HepG2 (cell line): ENCODE measurements at regions of chr3 and their contacts with region 1.

Region 1: DNA sequence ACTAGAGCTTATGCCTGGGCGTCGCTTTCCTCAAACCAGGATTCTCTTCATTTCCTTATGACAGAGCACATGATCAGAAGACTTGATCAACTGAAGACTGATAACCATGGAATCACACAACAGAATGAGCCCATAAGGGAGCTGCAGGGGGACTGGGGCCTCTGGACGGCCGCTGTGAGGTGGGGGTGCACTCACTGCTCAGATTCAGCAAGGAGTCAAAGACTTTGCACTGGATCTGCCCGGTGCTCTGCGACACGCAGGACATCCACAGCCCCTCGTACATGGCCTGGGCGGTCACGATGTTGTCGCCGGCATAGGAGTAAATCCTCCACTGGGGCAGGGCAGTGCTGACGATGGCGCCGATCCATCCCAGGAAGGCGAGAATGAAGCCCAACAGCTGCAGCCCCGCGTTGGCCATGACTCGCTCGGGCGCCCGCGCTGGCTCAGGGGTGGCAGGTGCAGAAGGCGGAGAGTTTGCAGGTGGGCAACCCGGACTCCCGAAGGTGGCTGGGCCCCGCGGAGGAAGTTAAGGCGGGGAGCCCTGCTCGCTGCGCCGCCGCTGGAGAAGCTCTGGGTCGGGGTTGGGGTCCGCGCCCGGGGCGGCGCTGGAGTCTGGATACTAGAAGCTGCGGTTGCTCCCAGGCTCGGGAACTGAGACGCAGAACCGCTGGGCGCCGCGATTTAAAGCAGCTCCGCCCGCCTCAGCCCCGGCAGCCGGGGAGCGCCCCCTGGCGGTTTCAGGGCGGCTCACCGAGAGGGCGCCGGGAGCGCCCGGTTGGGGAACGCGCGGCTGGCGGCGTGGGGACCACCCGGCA is at the start of gene CLDN1:
- DNase-seq: peak; percentile 70
- ATAC-seq: peak; percentile 94
- H3K4me3 ChIP-seq: peak within 1 kb of the TSS; percentile 92 to 96 (median 95)
- H3K27ac ChIP-seq: peak within 1 kb of the TSS; percentile 72
- H3K4me1 ChIP-seq: peaks cover 48% of the 10 kb centered on the region
- H3K27me3 ChIP-seq: no peaks in the 10 kb centered on the region; a peak in 1 of 5 replicates
- CTCF ChIP-seq: peak; percentile 89
- EP300 ChIP-seq: no peak
- POLR2A ChIP-seq: peak; percentile 76 to 84
- RAD21 ChIP-seq: peak; percentile 98
- total RNA-seq, gene CLDN1: 28.4 and 42.7 TPM in 2 replicates

Region 2: GRCh38 chr3:188881954-188882641 is 1439.9 kb before region 1 on chr3:
- CTCF ChIA-PET with region 1: no interaction called
- POLR2A ChIA-PET with region 1: no interaction called
- in situ Hi-C with region 1: no loop called
- intact Hi-C with region 1: loop called (anchors 10 kb)
- DNase-seq: peak; percentile 24
- ATAC-seq: no peak
- H3K4me3 ChIP-seq: no peak overlapping the region
- H3K27ac ChIP-seq: peak overlapping the region; percentile 62
- H3K4me1 ChIP-seq: peaks cover 26% of the 10 kb centered on the region
- H3K27me3 ChIP-seq: no peaks in the 10 kb centered on the region
- CTCF ChIP-seq: no peak
- EP300 ChIP-seq: no peak
- POLR2A ChIP-seq: no peak
- RAD21 ChIP-seq: no peak

Region 3: DNA sequence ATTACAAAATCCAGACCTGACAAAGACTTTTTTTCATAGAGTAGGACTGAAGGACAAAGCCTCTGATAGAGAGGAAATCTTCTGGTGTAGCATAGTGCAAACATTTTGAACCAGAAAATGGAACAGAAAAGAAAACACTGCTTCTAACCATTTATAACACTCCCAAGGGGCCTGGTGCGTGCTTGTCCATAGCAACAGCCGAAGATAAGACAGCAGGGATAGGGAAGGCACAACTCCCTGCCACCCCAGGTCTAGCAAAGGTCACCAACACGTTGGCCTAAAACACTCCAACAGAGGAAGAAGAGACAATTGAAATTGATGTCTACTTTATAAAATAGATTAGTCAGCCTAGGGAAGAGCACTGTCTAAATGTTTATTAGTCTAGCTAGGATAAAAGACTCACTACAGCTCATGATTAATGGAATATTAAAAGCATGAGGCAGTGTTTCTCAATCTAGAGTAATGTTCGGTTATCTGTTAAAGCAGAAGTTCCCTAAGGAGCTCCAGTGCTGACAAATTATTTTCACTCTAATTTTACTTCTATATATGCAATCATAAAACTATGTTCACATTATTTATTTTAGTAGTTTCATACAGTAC is 346.5 kb before region 1 on chr3:
- CTCF ChIA-PET with region 1: no interaction called
- POLR2A ChIA-PET with region 1: no interaction called
- in situ Hi-C with region 1: loop called (anchors 10 kb)
- intact Hi-C with region 1: no loop called
- DNase-seq: no peak
- ATAC-seq: no peak
- H3K4me3 ChIP-seq: no peak overlapping the region
- H3K27ac ChIP-seq: no peak overlapping the region
- H3K4me1 ChIP-seq: no peaks in the 10 kb centered on the region
- H3K27me3 ChIP-seq: no peaks in the 10 kb centered on the region
- CTCF ChIP-seq: no peak
- EP300 ChIP-seq: no peak
- POLR2A ChIP-seq: no peak
- RAD21 ChIP-seq: no peak

Region 4: DNA sequence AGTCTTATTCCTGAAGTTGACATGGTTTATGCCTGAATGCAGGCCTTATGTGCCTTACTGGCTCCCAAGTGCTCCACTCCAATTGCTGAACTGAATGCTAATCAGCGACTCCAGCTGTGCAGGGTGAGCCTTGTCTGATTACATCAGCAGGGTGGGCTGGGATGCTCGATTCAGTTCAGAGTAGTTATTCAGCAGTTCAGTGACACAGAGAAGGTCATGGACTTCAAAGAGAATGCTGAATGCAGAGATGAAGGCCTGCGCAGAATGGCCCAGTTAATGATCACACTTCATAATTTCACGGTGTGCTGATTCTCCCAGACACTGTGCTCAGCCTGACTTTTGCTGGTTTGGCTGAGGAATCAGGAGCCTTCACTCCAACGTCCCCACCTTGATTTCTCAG is 63.4 kb before region 1 on chr3:
- CTCF ChIA-PET with region 1: no interaction called
- POLR2A ChIA-PET with region 1: no interaction called
- in situ Hi-C with region 1: no loop called
- intact Hi-C with region 1: loop called (anchors 2 kb)
- DNase-seq: peak; percentile 63
- ATAC-seq: peak; percentile 99
- H3K4me3 ChIP-seq: no peak overlapping the region; a peak in 1 of 6 replicates
- H3K27ac ChIP-seq: no peak overlapping the region
- H3K4me1 ChIP-seq: peaks cover 19% of the 10 kb centered on the region
- H3K27me3 ChIP-seq: no peaks in the 10 kb centered on the region
- CTCF ChIP-seq: 0 out of 2 replicates have a peak, but pooled peaks have one; percentile 7
- EP300 ChIP-seq: no peak
- POLR2A ChIP-seq: no peak
- RAD21 ChIP-seq: no peak

Region 5: DNA sequence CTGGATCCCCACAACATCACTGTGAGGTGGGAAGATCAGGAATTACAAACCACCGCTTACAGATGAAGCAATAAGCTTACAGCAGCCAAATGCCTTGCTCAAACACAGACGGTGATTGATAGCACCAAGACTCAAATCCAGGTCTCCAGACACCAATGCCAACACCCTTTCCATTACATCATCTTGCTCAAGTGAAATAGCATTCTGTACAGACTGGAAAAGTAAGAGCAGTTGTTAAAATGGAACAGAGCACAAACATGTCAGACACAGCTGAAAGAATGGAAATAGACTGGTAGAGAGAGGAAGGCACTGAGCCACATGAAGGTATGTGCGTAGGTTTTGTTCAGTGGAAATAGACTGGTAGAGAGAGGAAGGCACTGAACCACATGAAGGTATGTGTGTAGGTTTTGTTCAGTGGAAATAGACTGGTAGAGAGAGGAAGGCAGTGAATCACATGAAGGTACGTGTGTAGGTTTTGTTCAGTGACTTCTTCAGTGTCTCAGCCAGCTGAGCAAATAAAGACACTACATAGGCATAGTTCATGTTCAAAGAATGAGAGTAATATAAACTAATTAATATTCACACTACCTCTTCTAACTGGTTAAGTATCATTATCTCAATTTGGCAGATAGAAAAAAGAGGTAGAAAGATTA is 15.4 kb before region 1 on chr3:
- CTCF ChIA-PET with region 1: no interaction called
- POLR2A ChIA-PET with region 1: interaction called, 54 read pairs
- in situ Hi-C with region 1: no loop called
- intact Hi-C with region 1: no loop called
- DNase-seq: peak; percentile 55
- ATAC-seq: peak; percentile 69
- H3K4me3 ChIP-seq: peak overlapping the region in 1 of 3 experiments; percentile 45; a peak in 1 of 6 replicates
- H3K27ac ChIP-seq: peak overlapping the region; percentile 80
- H3K4me1 ChIP-seq: peaks cover 68% of the 10 kb centered on the region
- H3K27me3 ChIP-seq: no peaks in the 10 kb centered on the region
- CTCF ChIP-seq: no peak
- EP300 ChIP-seq: peak in 1 of 2 experiments; percentile 54; a peak in 1 of 4 replicates
- POLR2A ChIP-seq: no peak
- RAD21 ChIP-seq: no peak

Region 6: GRCh38 chr3:190345027-190345821 is 23.2 kb after region 1 on chr3:
- CTCF ChIA-PET with region 1: no interaction called
- POLR2A ChIA-PET with region 1: interaction called, 49 read pairs
- in situ Hi-C with region 1: no loop called
- intact Hi-C with region 1: no loop called
- DNase-seq: peak; percentile 98
- ATAC-seq: peak; percentile 96
- H3K4me3 ChIP-seq: peak overlapping the region; percentile 35 to 45 (median 38); a peak in 5 of 6 replicates
- H3K27ac ChIP-seq: peak overlapping the region; percentile 89
- H3K4me1 ChIP-seq: peaks cover 35% of the 10 kb centered on the region
- H3K27me3 ChIP-seq: no peaks in the 10 kb centered on the region
- CTCF ChIP-seq: no peak
- EP300 ChIP-seq: peak in 1 of 2 experiments; percentile 87; a peak in 1 of 4 replicates
- POLR2A ChIP-seq: peak in 1 of 2 experiments; percentile 42; a peak in 1 of 4 replicates
- RAD21 ChIP-seq: no peak

Region 7: DNA sequence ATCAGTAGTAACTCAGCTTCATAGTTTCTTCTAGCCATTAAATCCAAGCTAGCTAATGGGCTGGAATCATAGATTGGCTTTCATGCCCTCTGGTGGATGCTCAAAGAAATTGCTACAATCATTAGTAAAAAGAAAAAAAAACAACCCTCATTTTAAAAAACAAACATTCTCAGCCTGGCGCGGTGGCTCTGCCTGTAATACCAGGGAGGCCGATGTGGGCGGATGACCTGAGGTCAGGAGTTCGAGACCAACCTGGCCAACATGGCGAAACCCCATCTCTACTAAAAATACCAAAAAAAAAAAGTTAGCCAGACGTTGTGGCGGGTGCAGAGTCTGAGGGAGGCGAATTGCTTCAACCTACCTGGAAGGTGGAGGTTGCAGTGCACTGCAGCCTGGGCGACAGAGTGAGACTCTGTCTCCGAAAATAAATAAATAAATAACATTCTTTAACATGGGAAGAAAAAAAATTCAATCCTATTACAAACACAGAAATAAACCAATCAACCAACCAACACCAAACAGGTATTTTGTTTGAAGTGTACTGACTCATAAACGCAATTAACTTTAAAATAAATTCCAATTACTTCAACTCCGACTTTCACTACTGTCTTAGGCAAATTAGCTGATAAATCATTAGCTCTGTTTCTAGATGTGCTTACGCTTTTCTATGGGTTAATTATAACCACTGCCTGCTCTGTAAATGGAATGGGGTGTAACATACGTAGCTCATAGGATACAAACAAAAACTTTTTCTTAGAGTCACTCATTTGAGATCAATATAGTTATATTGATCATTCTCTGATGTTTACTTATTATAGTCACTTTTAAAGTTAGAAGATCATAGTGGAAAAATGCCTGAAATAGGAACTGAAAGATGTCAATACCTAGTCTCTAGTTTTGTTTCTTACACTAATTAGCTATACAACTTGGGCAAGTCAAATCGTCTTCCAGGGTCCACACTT is 102.8 kb after region 1 on chr3:
- CTCF ChIA-PET with region 1: interaction called, 5 read pairs
- POLR2A ChIA-PET with region 1: interaction called, 4 read pairs
- in situ Hi-C with region 1: no loop called
- intact Hi-C with region 1: loop called (anchors 1 kb)
- DNase-seq: peak; percentile 77
- ATAC-seq: peak; percentile 96
- H3K4me3 ChIP-seq: no peak overlapping the region
- H3K27ac ChIP-seq: no peak overlapping the region
- H3K4me1 ChIP-seq: no peaks in the 10 kb centered on the region
- H3K27me3 ChIP-seq: no peaks in the 10 kb centered on the region
- CTCF ChIP-seq: peak; percentile 68
- EP300 ChIP-seq: peak in 1 of 2 experiments; percentile 27; a peak in 1 of 4 replicates
- POLR2A ChIP-seq: no peak
- RAD21 ChIP-seq: peak; percentile 59

Region 8: DNA sequence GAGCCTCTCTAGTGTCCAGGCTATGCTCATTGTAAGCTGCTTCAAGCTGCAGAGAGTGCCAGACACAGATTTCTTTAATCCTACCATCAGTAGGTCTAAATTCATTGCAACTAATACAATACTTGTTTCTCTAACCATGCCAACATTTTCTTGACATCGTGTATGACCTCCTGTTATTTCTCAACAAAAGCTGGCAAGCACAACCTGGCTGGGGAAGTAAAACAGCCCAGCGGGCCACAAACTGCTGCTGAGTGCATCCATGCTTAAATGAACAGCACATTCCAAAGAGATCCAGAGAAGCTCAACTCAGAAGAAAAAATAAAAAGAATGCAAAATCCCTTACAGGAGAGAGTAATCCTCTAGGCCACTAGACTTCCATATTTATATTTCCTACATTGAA is 504.0 kb after region 1 on chr3:
- CTCF ChIA-PET with region 1: no interaction called
- POLR2A ChIA-PET with region 1: no interaction called
- in situ Hi-C with region 1: no loop called
- intact Hi-C with region 1: no loop called
- DNase-seq: no peak
- ATAC-seq: no peak
- H3K4me3 ChIP-seq: no peak overlapping the region
- H3K27ac ChIP-seq: no peak overlapping the region
- H3K4me1 ChIP-seq: no peaks in the 10 kb centered on the region
- H3K27me3 ChIP-seq: no peaks in the 10 kb centered on the region
- CTCF ChIP-seq: no peak
- EP300 ChIP-seq: no peak
- POLR2A ChIP-seq: no peak
- RAD21 ChIP-seq: no peak